Right ventricle myocardium inferior (tissue), 1 donor: ENCODE measurements at regions of chr13 and their contacts with region 1.

Region 1: GRCh38 chr13:45807520-45808099 is 43.9 kb downstream of the SIAH3 start:
- DNase-seq: no peak
- ATAC-seq: peak; percentile 69

Region 2: GRCh38 chr13:45879670-45880069 is 72.1 kb after region 1 on chr13:
- intact Hi-C with region 1: loop called (anchors 2 kb)
- DNase-seq: peak; percentile 77
- ATAC-seq: peak; percentile 92

Region 3: GRCh38 chr13:45950386-45951000 is 142.9 kb after region 1 on chr13:
- intact Hi-C with region 1: loop called (anchors 10 kb)
- DNase-seq: no peak
- ATAC-seq: peak; percentile 48

Region 4: DNA sequence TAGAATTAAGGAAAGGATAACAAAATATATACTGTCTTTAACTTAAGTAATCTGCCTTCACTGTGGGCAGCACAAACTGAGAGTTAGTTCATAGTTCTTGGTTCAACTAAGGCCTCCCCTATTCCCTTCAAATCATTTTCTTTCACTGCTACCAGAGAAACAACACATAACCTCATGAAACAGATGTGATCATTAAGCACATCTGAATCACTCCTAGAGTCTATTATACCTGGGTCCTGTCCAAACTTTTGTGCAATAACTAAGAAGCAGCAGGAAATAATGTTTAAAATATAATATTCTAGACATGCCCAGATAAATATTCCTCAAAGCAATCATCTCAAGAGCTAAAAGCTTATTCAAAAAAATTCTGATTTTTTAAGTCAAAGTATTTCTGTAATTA is 182.0 kb after region 1 on chr13:
- intact Hi-C with region 1: loop called (anchors 10 kb)
- DNase-seq: no peak
- ATAC-seq: peak; percentile 63

Region 5: DNA sequence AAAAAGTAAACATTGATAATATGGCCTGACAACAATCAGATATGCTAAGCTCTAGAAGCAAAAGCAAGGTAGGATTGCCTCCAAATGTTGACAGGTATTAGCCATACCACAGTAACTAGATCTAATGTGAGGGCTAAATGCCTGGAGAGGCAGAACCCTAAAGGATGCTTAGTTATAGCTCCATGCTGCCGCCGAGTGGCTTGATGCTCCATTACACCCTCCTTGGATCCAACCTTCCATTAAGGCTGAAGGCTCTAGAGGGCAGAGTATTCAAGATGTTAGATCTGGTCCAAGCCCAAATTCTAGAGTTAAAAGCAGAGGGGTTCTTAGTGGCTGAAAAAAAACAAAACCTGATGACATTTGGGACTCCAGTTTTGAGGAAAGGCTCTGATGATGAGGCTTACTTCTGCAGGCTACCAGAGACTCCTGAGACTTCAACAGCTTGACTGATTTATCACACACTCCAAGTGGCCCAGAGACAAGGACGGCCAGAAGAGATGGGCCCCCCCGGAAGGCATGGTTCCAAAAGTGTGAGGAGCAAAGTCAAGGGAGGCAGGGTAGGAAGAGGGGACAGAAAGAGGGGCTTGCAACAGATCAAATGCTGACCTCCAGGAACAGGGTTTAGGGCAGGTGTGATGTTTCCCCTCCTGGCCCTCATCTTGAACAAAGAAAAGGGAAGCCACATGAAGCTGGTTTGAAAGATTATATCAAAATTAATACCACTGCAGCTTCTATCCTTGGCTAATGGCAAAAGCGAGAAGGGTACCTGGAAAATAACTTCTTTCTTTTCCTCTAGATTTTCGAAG is 319.1 kb after region 1 on chr13:
- intact Hi-C with region 1: loop called (anchors 2 kb)
- DNase-seq: peak; percentile 71
- ATAC-seq: peak; percentile 81